OCI-LY7 (cell line): ENCODE measurements at regions of chr1 and their contacts with region 1.

Region 1: GRCh38 chr1:155934097-155934935 is at the start of gene KHDC4:
- DNase-seq: peak; percentile 99
- H3K4me3 ChIP-seq: peak within 1 kb of the TSS; percentile 87
- H3K27ac ChIP-seq: peak within 1 kb of the TSS; percentile 82
- H3K4me1 ChIP-seq: peaks cover 52% of the 10 kb centered on the region
- CTCF ChIP-seq: no peak; the same call in 1 of the 2 replicates
- total RNA-seq, gene KHDC4: 84.6 and 88.9 TPM in 2 replicates

Region 2: DNA sequence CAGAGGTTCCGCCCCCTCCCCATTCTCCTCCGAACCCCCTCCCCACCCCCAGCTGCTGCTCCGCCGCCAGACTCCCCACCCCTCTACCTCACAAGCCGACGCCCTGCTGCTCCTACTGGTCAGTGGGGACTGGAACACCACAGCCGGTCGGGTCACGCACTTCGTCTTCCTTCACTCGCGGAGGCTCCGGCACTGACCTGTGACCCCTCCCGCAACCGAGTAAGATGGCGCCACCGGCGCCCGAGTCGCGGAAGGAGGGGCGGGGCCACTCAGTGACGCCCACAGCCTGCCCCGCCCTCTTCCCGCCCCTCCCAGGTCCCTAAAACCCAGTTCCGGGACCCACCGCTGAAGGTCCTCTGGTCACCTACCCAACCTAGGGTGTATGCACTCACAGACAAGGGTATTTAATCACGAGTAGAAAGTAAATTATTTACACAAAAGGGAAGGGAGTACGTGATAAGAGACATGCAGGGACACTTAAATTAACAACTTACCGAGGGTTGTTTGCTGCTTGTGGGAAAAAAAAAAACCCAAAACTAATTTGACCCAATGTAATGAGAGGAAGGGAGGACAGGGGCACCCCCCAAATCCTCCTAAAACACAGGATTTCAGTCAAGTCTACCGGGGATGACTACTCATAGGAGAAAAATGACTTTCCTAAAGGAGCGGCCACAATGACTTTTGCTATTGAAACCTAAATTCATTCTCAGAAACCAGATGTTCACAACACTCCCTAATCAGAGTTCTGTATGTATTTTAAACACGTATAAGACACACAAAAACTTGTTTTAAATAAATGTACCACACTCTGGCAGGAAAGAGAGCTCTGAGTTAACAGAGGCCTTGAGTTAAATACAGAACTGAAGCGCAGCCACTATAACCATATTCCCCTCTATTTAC is 22.9 kb before region 1 on chr1 and contains the start of gene RIT1:
- CTCF ChIA-PET with region 1: no interaction called
- POLR2A ChIA-PET with region 1: interaction called, 13 read pairs
- intact Hi-C with region 1: no loop called
- DNase-seq: peak; percentile 90
- H3K4me3 ChIP-seq: peak within 1 kb of the TSS; percentile 78
- H3K27ac ChIP-seq: peak within 1 kb of the TSS; percentile 65
- H3K4me1 ChIP-seq: peaks cover 23% of the 10 kb centered on the region
- CTCF ChIP-seq: no peak
- total RNA-seq, gene RIT1: 15.9 and 17.2 TPM in 2 replicates

Region 3: DNA sequence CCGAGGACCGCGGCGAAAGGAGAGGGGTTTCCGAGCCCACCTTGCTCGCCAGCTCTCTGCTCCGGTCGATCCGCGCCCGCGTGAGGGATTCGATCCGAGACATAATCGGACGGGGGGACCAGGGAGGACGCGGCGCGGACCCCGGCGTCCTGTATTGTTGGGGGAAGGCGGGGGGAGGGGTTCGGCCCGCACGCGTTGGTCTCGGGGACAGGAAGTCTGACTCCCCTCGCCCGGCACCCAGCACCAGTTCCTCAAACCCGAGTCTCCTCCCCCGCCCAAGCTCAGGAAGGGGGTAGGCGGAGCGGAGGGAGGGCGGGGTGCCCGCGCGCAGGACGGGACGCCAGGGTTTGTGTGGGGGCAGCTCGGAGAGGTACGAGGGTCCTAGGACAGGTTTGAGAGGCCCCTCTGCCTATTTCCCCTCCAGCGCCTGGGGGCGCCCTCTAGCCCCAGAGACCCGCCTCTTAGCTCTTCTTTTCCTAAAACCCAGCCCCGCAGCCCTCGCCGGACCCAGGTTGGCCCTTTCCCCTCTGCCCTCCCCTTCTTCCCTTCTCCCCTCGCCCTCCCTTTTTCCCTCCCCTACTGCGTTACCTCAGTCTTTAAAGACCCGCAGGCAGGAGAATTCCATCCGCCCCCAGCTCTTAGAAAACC is 44.1 kb after region 1 on chr1 and contains the start of gene ARHGEF2:
- CTCF ChIA-PET with region 1: interaction called, 7 read pairs
- POLR2A ChIA-PET with region 1: interaction called, 19 read pairs
- intact Hi-C with region 1: loop called (anchors 2 kb)
- DNase-seq: peak; percentile 94
- H3K4me3 ChIP-seq: peak within 1 kb of the TSS; percentile 85
- H3K27ac ChIP-seq: peak within 1 kb of the TSS; percentile 94
- H3K4me1 ChIP-seq: peaks cover 68% of the 10 kb centered on the region
- CTCF ChIP-seq: peak; percentile 70
- total RNA-seq, gene ARHGEF2: 78.8 and 106 TPM in 2 replicates

Region 4: DNA sequence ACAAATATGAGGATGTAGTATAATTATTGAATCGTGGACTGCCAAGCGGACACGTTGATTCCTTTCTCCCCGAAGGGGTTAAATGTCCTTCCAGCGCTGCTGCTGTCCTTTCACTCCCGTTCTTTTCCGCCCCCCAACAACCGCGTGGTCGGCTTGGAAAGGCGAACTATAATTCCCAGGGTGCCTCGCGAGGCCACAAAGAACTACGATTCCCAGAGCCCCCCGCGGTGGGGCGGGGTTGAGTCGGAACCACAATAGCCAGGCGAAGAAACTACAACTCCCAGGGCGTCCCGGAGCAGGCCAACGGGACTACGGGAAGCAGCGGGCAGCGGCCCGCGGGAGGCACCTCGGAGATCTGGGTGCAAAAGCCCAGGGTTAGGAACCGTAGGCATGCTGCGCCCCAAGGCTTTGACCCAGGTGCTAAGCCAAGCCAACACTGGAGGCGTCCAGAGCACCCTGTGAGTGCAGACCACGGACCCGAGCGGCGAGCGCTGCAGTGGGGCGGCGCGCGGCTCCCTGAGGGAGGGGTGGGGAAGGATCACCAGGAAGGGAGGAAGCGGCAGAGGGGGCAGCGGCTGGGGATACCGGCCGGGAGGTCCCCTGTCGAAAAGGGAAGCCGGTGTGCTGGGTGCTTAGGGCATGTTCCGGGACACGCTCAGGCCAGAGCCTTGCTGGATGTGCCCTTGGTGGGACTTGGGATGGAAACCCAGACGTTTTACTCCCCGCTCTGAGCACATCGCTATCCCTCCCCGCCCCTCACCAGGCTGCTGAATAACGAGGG is 120.4 kb after region 1 on chr1 and contains the start of gene LAMTOR2:
- CTCF ChIA-PET with region 1: no interaction called
- POLR2A ChIA-PET with region 1: no interaction called
- intact Hi-C with region 1: loop called (anchors 2 kb)
- DNase-seq: peak; percentile 97
- H3K4me3 ChIP-seq: peak within 1 kb of the TSS; percentile 81
- H3K27ac ChIP-seq: peak within 1 kb of the TSS; percentile 86
- H3K4me1 ChIP-seq: peaks cover 21% of the 10 kb centered on the region
- CTCF ChIP-seq: no peak
- total RNA-seq, gene LAMTOR2: 71.3 and 103 TPM in 2 replicates

Region 5: DNA sequence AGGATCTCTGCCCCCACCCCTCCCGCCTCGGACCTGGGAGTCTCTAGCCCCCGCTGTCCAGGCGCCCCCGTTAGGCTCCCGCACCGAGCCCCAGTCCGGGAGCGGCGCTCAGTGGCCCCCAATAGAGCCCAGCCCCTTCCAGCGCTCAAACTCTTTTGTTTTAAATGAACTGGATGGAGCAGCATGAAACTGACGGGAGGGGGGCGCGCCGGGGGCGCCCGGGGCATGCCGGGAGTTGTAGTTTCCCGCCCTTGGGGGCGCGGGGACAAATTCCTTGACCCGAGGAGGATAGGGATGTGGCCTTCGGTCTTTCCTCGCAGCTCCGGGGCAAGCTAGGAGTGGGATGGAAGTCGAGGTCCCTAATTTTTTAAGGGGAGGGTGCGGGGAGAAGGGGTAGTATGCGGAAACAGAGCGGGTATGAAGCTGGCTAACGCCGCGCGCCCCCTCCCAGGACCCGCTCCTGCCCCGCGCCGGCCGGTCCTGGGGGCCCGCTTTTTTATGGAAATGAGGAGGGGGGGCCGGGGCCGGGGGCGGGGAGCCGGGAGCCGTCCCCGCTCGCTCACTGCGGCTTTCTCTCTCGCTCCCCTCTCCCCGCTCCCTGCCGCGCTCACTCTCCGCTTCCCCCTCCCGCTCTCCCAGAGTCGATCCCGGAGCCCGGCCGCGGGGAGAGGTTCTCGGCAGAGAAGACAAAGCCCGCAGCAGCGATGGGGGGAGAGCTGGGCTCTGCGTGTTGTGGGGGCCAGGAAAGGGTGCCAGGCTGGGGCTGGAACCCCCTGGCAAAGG is 148.2 kb after region 1 on chr1 and contains the start of gene MEX3A:
- CTCF ChIA-PET with region 1: no interaction called
- POLR2A ChIA-PET with region 1: no interaction called
- intact Hi-C with region 1: no loop called
- DNase-seq: peak; percentile 76
- H3K4me3 ChIP-seq: peak within 1 kb of the TSS; percentile 94
- H3K27ac ChIP-seq: no peak within 1 kb of the TSS
- H3K4me1 ChIP-seq: peaks cover 26% of the 10 kb centered on the region
- CTCF ChIP-seq: no peak
- total RNA-seq, gene MEX3A: 4.5 and 5.3 TPM in 2 replicates